Activated CD4-positive, alpha-beta T cell treated with anti-CD3 and anti-CD28 coated beads for 36 hours (primary cell): ENCODE measurements at regions of chr12 and their contacts with region 1.

Region 1: DNA sequence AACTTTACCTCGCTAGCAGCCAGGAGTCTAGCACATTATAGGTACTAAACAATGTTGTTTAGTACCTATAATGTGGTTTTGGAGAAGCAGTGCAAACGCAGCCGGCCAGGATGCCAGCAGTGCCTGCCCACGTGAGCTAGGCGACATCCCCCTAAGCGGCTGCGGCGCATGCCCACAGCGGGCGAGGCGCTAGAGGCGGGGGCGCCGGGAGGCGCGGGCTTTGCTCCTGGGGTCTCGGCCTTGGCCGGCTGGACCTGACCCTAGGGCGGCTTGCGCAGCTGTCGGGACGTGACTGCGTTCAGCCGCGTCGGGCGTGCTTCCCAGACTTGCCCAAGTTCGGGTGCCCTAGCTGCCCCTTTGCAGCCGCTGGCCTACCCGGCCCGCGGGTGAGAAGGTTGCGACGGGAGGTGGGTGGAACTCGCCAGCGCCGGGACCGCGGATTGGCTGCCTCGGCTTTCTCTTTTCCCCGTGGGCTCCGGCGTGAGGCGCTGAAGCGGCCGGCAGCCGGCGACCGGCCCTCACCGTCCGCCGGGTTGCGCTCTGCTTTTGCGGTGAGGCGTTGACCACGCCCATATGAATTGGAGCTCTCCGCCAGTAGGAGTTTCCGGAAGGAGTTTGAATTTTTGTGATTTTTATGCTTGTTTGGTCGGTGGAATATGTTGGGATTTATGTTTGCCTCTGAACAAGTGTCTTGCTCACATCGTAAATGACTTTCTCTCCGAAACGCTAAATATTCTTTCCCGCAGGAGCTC is at the start of gene TMEM19:
- DNase-seq: peak; percentile 87
- ATAC-seq: peak; percentile 88
- H3K4me3 Mint-ChIP-seq: peak within 1 kb of the TSS; percentile 87
- H3K27ac Mint-ChIP-seq: peak within 1 kb of the TSS; percentile 91
- H3K4me1 Mint-ChIP-seq: peaks cover 17% of the 10 kb centered on the region
- H3K27me3 Mint-ChIP-seq: no peaks in the 10 kb centered on the region
- total RNA-seq, gene TMEM19: 6.1 to 12.9 TPM

Region 2: GRCh38 chr12:71626098-71626497 is 60.0 kb before region 1 on chr12:
- CTCF ChIA-PET with region 1: no interaction called
- POLR2A ChIA-PET with region 1: no interaction called
- intact Hi-C with region 1: no loop called
- DNase-seq: no peak
- ATAC-seq: no peak
- H3K4me3 Mint-ChIP-seq: no peak overlapping the region
- H3K27ac Mint-ChIP-seq: peak overlapping the region; percentile 15
- H3K4me1 Mint-ChIP-seq: peaks cover 17% of the 10 kb centered on the region
- H3K27me3 Mint-ChIP-seq: no peaks in the 10 kb centered on the region

Region 3: DNA sequence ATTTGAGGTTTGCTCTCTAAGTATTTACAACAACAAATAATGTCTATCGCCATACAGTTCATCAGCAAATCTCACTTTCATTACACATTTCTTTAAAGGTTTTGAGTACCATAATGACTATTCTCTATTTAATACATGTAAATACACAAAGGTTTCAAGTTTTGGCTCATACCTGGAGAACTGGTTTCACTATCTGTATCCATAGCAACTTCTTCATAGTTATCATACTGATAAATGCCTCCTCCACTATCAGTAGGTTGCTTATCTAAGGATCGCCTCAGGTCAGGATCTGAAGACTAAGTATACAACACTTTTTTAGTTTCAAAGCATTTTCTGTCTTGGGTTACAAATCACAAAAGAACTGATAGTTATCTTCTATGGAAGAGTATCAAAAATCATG is 43.8 kb before region 1 on chr12:
- CTCF ChIA-PET with region 1: no interaction called
- POLR2A ChIA-PET with region 1: interaction called, 3 read pairs
- intact Hi-C with region 1: loop called in 1 of 2 experiments (anchors 2 kb)
- DNase-seq: no peak
- ATAC-seq: peak; percentile 78
- H3K4me3 Mint-ChIP-seq: no peak overlapping the region
- H3K27ac Mint-ChIP-seq: peak overlapping the region; percentile 65
- H3K4me1 Mint-ChIP-seq: peaks cover 47% of the 10 kb centered on the region
- H3K27me3 Mint-ChIP-seq: no peaks in the 10 kb centered on the region

Region 4: GRCh38 chr12:71671816-71672215 is 14.3 kb before region 1 on chr12:
- CTCF ChIA-PET with region 1: interaction called, 11 read pairs
- POLR2A ChIA-PET with region 1: no interaction called
- intact Hi-C with region 1: no loop called
- DNase-seq: no peak
- ATAC-seq: no peak
- H3K4me3 Mint-ChIP-seq: no peak overlapping the region
- H3K27ac Mint-ChIP-seq: no peak overlapping the region
- H3K4me1 Mint-ChIP-seq: peaks cover 24% of the 10 kb centered on the region
- H3K27me3 Mint-ChIP-seq: no peaks in the 10 kb centered on the region

Region 5: GRCh38 chr12:71754461-71755145 is 68.5 kb after region 1 on chr12 and contains the start of gene RAB21:
- CTCF ChIA-PET with region 1: interaction called, 3 read pairs
- POLR2A ChIA-PET with region 1: interaction called, 4 read pairs
- intact Hi-C with region 1: loop called (anchors 1 kb)
- DNase-seq: peak; percentile 100
- ATAC-seq: peak; percentile 92
- H3K4me3 Mint-ChIP-seq: peak within 1 kb of the TSS; percentile 94
- H3K27ac Mint-ChIP-seq: peak within 1 kb of the TSS; percentile 99
- H3K4me1 Mint-ChIP-seq: peaks cover 35% of the 10 kb centered on the region
- H3K27me3 Mint-ChIP-seq: peaks cover 9% of the 10 kb centered on the region
- total RNA-seq, gene RAB21: 88.9 to 98.9 TPM